Activated B cell treated with CpG ODN at 0.5 μM for 24 hours (primary cell): ENCODE measurements at regions of chr15 and their contacts with region 1.

Region 1: DNA sequence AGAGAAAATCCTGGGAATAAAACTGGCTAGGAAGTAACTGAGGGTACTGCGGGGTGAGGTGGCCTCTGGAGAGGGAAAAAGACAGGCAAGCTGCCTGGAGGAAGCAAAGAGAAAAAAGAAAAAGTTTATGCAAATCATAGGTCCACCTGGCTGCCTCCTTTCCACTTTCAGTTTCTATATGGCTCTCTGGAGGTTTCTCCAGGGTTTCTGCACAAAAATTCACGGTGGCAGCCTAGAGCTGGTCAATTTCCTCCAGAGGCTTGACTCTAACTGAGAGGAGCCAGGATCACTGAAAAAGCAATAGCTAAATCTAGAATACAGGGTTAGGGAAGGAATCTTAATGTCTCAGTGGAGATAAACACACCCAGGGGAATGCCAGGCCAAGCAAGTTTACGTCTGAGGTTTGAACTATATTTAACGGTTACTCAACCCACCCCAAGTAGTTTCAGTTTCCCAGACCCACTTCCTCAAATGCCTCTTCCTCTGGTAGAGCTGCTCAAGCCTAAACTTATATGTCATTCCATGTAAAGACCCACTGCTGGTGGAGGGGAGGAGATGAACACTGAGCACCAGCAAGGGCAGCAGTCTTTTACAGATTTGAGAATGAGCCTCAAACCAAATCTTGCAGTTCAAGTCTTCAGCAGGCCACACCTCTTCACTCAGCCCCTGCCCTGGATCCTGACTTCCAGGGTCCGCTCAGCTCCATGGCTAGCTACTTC is 5.7 kb downstream of the LYSMD2 start:
- DNase-seq: peak; percentile 44
- ATAC-seq: peak; percentile 61
- H3K4me3 Mint-ChIP-seq: peak overlapping the region; percentile 80
- H3K27ac Mint-ChIP-seq: peak overlapping the region; percentile 93
- H3K4me1 Mint-ChIP-seq: peaks cover 94% of the 10 kb centered on the region
- H3K27me3 Mint-ChIP-seq: no peaks in the 10 kb centered on the region
- CTCF ChIP-seq: no peak

Region 2: DNA sequence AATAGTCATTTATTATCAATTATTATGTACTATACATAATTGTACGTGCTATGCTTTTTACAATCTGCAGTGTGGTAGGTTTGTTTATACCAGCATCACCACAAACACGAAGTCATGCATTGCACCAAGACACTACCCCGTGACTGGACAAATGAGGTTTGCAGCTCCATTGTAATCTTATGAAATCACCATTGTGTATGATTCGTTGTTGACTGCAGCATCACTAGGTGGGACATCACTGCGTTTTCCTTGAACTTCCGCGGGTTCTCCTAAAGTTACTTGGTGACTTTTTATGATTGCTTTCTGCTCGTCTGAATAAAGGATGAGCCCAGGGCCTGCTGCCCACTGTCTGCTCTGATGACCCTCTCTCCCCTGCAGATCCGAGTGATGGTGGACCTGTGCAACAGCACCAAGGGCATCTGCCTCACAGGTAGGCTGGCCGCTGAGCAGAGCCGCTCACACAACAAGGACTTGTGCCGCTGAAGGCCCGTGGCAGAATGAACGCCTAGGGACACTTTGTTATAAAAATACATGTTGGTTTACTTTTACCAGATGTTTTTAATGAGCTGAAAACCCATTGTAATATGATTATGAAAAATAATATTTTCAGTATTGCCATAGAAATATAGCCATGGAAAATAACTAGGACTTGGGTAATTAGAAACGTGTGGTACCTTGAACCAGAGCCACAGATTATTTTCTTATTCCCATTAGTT is 354.5 kb before region 1 on chr15:
- CTCF ChIA-PET with region 1: no interaction called
- POLR2A ChIA-PET with region 1: no interaction called
- intact Hi-C with region 1: no loop called
- DNase-seq: no peak
- ATAC-seq: no peak
- H3K4me3 Mint-ChIP-seq: no peak overlapping the region
- H3K27ac Mint-ChIP-seq: no peak overlapping the region
- H3K4me1 Mint-ChIP-seq: no peaks in the 10 kb centered on the region
- H3K27me3 Mint-ChIP-seq: no peaks in the 10 kb centered on the region
- CTCF ChIP-seq: no peak

Region 3: DNA sequence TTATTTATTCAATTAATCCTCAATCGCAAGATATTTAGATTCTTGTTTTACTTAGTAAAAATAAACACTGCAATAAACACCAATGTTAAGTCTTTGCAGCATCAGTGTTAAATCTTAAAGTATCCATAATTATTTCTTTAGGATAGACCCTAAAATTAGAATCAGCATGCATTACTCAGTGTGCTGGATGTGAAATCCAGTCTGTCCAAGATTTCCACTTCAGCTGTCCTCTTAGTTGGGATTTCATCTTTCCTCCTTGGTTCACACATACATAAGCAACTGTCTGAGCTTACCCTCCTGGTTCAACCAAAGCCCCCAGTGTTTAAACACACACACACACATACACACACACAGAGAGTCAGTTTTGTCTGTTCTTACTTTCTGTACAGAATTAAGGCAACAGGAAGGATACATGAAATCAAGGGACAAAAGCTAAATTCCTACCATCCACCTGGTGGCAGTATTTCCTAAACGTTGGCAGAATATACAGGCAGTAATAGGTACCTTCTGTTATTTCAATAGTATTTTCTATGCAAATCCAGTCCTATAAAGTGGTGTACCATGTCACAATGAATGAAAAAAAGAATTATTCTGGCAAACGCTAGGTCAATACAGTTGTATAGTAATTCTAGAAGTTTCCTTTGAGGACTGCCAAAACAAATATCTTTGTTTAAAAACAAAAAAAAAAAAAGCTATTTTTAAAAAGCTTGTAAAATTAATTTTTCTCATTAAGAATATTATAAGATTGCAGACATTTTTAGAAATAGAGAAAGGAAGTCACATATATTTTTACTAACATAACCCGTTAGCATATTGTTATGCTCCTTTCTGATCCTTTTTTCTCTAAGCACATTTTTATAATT is 81.8 kb before region 1 on chr15:
- CTCF ChIA-PET with region 1: interaction called, 35 read pairs
- POLR2A ChIA-PET with region 1: interaction called, 18 read pairs
- intact Hi-C with region 1: loop called (anchors 1 kb)
- DNase-seq: no peak
- ATAC-seq: peak; percentile 84
- H3K4me3 Mint-ChIP-seq: no peak overlapping the region
- H3K27ac Mint-ChIP-seq: no peak overlapping the region
- H3K4me1 Mint-ChIP-seq: no peaks in the 10 kb centered on the region
- H3K27me3 Mint-ChIP-seq: no peaks in the 10 kb centered on the region
- CTCF ChIP-seq: no peak

Region 4: GRCh38 chr15:51692154-51692553 is 39.6 kb before region 1 on chr15:
- CTCF ChIA-PET with region 1: no interaction called
- POLR2A ChIA-PET with region 1: no interaction called
- intact Hi-C with region 1: no loop called
- DNase-seq: no peak
- ATAC-seq: no peak
- H3K4me3 Mint-ChIP-seq: no peak overlapping the region
- H3K27ac Mint-ChIP-seq: no peak overlapping the region
- H3K4me1 Mint-ChIP-seq: peaks cover 19% of the 10 kb centered on the region
- H3K27me3 Mint-ChIP-seq: peaks cover 9% of the 10 kb centered on the region
- CTCF ChIP-seq: no peak

Region 5: DNA sequence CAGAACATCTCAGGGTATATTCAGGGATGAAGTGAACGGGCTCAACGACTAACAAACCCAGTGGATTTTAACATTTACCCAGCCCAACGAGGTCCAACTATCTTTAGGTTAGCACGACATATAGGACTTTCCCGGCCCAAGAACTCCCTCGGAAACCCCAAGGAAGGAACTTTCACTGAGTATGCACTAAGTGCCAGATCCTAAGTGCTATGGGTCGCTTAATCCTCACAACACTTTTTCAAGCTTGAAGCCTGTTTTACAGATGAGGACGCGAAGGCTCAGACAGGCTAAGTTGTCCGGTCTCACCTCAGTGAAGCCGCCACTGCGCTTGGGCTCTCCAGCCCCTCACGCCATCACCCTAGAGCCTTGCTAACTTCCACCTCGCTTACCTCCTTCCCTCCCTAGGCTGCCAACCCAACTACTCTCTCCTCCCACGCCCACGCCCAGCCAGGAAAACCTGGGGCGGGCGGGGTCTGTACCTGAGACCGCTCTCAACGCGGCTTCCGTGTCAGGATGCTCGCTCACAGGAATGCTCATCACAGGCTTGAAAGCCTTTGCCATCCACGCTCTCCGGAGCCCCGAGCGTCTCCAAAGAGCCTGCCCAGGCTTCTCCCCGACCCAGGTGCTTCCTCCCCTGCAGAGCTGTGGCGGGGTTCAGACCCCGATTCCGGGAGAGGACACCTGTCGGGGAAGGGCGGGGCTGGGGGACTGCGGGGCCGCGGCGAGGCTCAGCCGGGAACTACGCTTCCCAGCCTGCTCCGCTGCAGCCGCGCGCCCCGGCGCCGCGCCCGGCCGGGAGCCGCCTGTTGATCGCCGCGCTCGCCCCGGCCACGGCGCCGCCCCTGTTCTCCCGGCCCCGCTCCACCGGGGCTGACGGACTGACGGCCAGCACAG is 19.3 kb after region 1 on chr15 and contains the start of gene TMOD2:
- CTCF ChIA-PET with region 1: interaction called, 10 read pairs
- POLR2A ChIA-PET with region 1: interaction called, 98 read pairs
- intact Hi-C with region 1: loop called (anchors 1 kb)
- DNase-seq: peak; percentile 62
- ATAC-seq: peak; percentile 83
- H3K4me3 Mint-ChIP-seq: peak within 1 kb of the TSS; percentile 96
- H3K27ac Mint-ChIP-seq: peak within 1 kb of the TSS; percentile 86
- H3K4me1 Mint-ChIP-seq: peaks cover 37% of the 10 kb centered on the region
- H3K27me3 Mint-ChIP-seq: no peaks in the 10 kb centered on the region
- CTCF ChIP-seq: no peak
- total RNA-seq, gene TMOD2: 11.3 and 14.6 TPM in 2 replicates

Region 6: DNA sequence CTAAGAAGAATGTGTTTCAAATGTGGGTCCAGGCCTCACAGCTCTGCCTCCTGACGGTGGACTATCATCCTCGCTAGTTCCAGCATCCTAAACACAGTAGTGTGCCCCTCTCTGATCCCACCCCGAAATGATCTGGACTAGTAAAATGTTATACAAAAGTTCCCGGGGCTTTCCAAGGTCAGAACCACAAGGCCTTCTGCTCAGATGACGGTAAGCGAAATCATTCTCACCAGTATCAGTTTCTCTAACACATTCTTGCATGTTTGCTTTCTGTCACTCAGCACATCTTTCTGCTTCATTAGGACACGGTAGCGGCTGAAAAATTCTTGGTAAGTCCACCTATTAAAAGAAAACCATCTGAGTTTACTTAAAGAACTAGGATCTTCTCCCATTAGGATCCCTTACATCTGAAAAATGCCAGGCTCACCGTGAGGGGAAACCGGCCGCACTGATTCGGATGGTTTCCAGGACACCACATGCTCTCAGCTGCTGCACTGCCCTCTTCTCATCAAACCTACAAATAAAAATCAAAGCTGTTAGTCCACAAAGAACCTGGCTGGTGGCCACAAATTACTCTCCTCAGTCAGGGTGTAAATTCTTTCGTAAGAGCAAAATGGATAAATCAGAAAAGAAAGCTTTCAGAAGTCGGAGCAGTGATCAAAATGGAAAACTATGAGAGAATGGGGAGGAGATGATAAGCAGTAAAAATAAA is 647.8 kb after region 1 on chr15:
- CTCF ChIA-PET with region 1: no interaction called
- POLR2A ChIA-PET with region 1: no interaction called
- intact Hi-C with region 1: no loop called
- DNase-seq: no peak
- ATAC-seq: peak; percentile 74
- H3K4me3 Mint-ChIP-seq: peak overlapping the region; percentile 47
- H3K27ac Mint-ChIP-seq: peak overlapping the region; percentile 82
- H3K4me1 Mint-ChIP-seq: peaks cover 28% of the 10 kb centered on the region
- H3K27me3 Mint-ChIP-seq: no peaks in the 10 kb centered on the region
- CTCF ChIP-seq: no peak